ENCODE measurements at regions of chr6 and their contacts with region 1.

Region 1: GRCh38 chr6:109526905-109527628 is 44.0 kb upstream of the ZBTB24 start:
- DNase-seq: peak; percentile 33 to 80 (median 48)
- ATAC-seq: peak; percentile 98
- H3K4me3 ChIP-seq: no peak overlapping the region
- H3K27ac ChIP-seq: no peak overlapping the region
- H3K4me1 ChIP-seq: no peaks in the 10 kb centered on the region
- H3K27me3 ChIP-seq: peaks cover 9 to 14% of the 10 kb centered on the region in 2 experiments; a peak in 2 of 5 replicates
- CTCF ChIP-seq: peak; percentile 57 to 83 (median 69)
- EP300 ChIP-seq: no peak
- POLR2A ChIP-seq: no peak
- RAD21 ChIP-seq: peak; percentile 74 to 85

Region 2: DNA sequence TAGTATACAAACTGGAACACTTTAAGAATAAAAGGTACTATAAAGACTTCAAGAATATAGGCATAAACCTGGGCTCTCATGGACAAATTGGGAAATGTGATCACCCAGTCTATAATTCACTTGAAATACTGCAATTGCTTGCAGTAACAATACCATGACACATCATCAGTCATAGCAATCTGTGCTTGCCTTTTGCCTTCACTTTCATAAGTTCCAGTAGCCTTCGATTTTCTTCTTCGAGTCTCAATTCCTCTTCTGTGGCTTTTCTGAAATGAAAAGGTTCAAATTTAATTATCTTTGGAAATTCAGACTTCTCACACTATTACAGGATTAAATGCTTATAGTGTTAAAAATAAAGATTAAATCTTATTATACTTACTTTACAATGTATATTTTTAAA is 52.3 kb after region 1 on chr6:
- CTCF ChIA-PET with region 1: no interaction called
- POLR2A ChIA-PET with region 1: no interaction called
- in situ Hi-C with region 1: no loop called
- intact Hi-C with region 1: no loop called
- DNase-seq: no peak
- ATAC-seq: no peak
- H3K4me3 ChIP-seq: no peak overlapping the region
- H3K27ac ChIP-seq: no peak overlapping the region
- H3K4me1 ChIP-seq: no peaks in the 10 kb centered on the region
- H3K27me3 ChIP-seq: no peaks in the 10 kb centered on the region
- CTCF ChIP-seq: no peak
- EP300 ChIP-seq: no peak
- POLR2A ChIP-seq: no peak
- RAD21 ChIP-seq: no peak

Region 3: GRCh38 chr6:109690737-109691621 is 163.9 kb after region 1 on chr6 and contains the starts of genes AK9 and FIG4:
- CTCF ChIA-PET with region 1: no interaction called
- POLR2A ChIA-PET with region 1: no interaction called
- in situ Hi-C with region 1: no loop called
- intact Hi-C with region 1: loop called (anchors 5 kb)
- DNase-seq: peak; percentile 89 to 95 (median 92)
- ATAC-seq: peak; percentile 100
- H3K4me3 ChIP-seq: peak within 1 kb of the TSS; percentile 55
- H3K27ac ChIP-seq: peak within 1 kb of the TSS; percentile 29; the same call in 1 of the 3 replicates
- H3K4me1 ChIP-seq: peaks cover 0 to 12% of the 10 kb centered on the region in 2 experiments; a peak in 3 of 5 replicates
- H3K27me3 ChIP-seq: peaks cover 2 to 4% of the 10 kb centered on the region in 2 experiments; a peak in 2 of 5 replicates
- CTCF ChIP-seq: peak in 2 of 3 experiments; percentile 29 to 36; a peak in 3 of 6 replicates
- EP300 ChIP-seq: no peak
- POLR2A ChIP-seq: peak; percentile 69
- RAD21 ChIP-seq: peak; percentile 42 to 46; a peak in 3 of 4 replicates
- polyA plus RNA-seq, gene AK9: 1.2 to 1.9 TPM
- polyA plus RNA-seq, gene FIG4: 1.5 to 1.8 TPM

Region 4: DNA sequence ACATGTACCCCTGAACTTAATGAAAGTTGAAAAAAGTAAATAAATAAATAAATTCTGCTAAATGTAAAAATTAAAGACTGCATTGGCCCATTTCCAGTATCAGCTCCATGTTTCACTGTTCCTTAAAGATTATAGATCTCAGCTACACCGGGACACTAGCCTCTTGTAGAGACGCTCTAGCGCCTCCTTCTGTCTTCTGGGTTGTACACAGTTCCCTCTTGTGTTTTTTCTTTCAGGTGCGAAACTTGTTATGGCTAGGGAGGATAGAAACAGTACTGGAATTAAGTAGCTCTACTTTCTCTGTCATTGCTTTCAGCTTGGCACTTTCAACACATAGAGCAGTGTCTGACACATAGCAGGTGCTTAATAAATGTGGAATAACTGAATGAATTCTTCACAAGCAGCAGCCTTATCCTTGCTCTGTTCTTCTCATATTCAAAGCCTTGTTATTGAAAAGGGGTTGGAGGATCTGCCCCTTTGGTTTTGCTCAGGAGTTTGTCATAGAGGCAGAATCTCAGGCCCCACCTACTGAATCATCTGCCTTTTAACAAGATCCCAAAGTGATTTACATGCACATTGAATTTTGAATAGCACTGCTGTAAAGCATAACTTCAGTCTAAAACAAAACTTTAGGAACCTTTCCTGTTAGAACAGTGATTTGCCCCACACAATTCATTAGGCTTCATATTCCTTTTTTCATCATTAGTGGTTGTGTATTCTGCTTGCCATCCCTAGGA is 256.4 kb after region 1 on chr6:
- CTCF ChIA-PET with region 1: no interaction called
- POLR2A ChIA-PET with region 1: no interaction called
- in situ Hi-C with region 1: no loop called
- intact Hi-C with region 1: loop called (anchors 1 kb)
- DNase-seq: peak; percentile 14 to 52 (median 24)
- ATAC-seq: peak; percentile 86
- H3K4me3 ChIP-seq: no peak overlapping the region
- H3K27ac ChIP-seq: no peak overlapping the region
- H3K4me1 ChIP-seq: no peaks in the 10 kb centered on the region
- H3K27me3 ChIP-seq: no peaks in the 10 kb centered on the region; a peak in 1 of 5 replicates
- CTCF ChIP-seq: peak; percentile 65 to 80 (median 67)
- EP300 ChIP-seq: no peak
- POLR2A ChIP-seq: no peak
- RAD21 ChIP-seq: peak; percentile 88 to 91

Region 5: DNA sequence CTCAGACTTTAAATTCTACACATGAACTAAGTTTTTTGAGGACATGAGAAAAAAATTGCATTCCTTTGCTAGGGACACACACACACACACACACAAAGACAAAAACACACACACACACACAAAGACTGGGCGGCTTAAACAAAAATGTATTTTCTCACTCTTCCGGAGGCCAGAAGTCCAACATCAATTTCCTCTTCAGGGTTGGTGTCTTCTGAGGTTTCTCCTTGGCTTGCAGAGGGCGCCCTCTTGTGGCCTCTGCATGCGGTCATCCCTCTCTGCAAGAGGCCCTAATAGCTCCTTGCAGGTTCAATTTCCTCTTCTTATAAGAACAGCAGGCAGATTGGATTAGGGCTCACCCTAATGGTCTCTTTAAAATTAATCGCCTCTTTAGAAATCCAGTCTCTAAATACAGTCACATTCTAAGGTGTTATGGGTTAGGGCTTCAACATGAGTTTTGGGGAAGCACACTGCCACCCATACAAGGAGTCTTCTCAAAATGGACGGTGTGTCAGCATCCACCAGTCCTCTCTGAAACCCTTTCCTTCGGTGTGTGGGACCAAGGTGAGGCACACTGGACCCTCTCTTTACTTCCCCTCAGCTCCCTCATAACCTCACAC is 512.4 kb after region 1 on chr6:
- CTCF ChIA-PET with region 1: no interaction called
- POLR2A ChIA-PET with region 1: no interaction called
- in situ Hi-C with region 1: loop called (anchors 25 kb)
- intact Hi-C with region 1: loop called (anchors 1 kb)
- DNase-seq: peak; percentile 66 to 85 (median 68)
- ATAC-seq: peak; percentile 96
- H3K4me3 ChIP-seq: no peak overlapping the region
- H3K27ac ChIP-seq: no peak overlapping the region
- H3K4me1 ChIP-seq: no peaks in the 10 kb centered on the region
- H3K27me3 ChIP-seq: peaks cover 4 to 23% of the 10 kb centered on the region in 2 experiments; a peak in 3 of 5 replicates
- CTCF ChIP-seq: peak; percentile 90 to 94 (median 90)
- EP300 ChIP-seq: no peak
- POLR2A ChIP-seq: no peak
- RAD21 ChIP-seq: peak; percentile 95 to 97

Region 6: GRCh38 chr6:110053395-110054240 is 526.6 kb after region 1 on chr6:
- CTCF ChIA-PET with region 1: interaction called, 6 read pairs
- POLR2A ChIA-PET with region 1: no interaction called
- in situ Hi-C with region 1: loop called (anchors 25 kb)
- intact Hi-C with region 1: loop called (anchors 2 kb)
- DNase-seq: peak; percentile 29 to 45 (median 35)
- ATAC-seq: peak; percentile 75; the same call in 2 of the 3 replicates
- H3K4me3 ChIP-seq: no peak overlapping the region
- H3K27ac ChIP-seq: no peak overlapping the region
- H3K4me1 ChIP-seq: no peaks in the 10 kb centered on the region
- H3K27me3 ChIP-seq: peaks cover 2 to 30% of the 10 kb centered on the region in 2 experiments
- CTCF ChIP-seq: peak; percentile 52 to 77 (median 70)
- EP300 ChIP-seq: no peak
- POLR2A ChIP-seq: no peak
- RAD21 ChIP-seq: peak; percentile 83

Region 7: DNA sequence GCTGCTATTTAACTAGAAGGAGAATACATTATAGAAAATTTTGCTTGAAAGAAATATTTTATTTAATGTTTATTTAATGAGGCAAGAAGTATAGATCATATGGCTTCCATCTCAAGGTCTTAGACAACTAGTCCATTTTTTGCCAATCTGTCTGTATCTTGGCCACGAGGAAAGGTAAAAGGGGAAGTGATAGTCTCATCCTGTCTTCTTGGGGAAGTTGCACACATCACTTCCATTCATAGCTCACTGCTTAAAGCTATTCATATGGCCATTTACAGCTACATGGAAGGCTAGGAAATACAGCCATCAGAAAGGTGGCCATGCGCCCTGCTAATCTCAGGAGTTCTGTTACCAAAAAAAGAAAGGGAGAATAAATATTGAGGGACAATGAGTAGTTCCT is 780.3 kb after region 1 on chr6:
- CTCF ChIA-PET with region 1: no interaction called
- POLR2A ChIA-PET with region 1: no interaction called
- in situ Hi-C with region 1: no loop called
- intact Hi-C with region 1: no loop called
- DNase-seq: no peak
- ATAC-seq: no peak
- H3K4me3 ChIP-seq: no peak overlapping the region
- H3K27ac ChIP-seq: no peak overlapping the region
- H3K4me1 ChIP-seq: no peaks in the 10 kb centered on the region
- H3K27me3 ChIP-seq: no peaks in the 10 kb centered on the region; a peak in 1 of 5 replicates
- CTCF ChIP-seq: no peak
- EP300 ChIP-seq: no peak
- POLR2A ChIP-seq: no peak
- RAD21 ChIP-seq: no peak

Region 8: GRCh38 chr6:110389689-110390382 is 862.8 kb after region 1 on chr6:
- CTCF ChIA-PET with region 1: interaction called, 7 read pairs
- POLR2A ChIA-PET with region 1: no interaction called
- in situ Hi-C with region 1: loop called (anchors 25 kb)
- intact Hi-C with region 1: loop called (anchors 5 kb)
- DNase-seq: peak in 1 of 4 experiments; percentile 23
- ATAC-seq: peak; percentile 42; the same call in 1 of the 3 replicates
- H3K4me3 ChIP-seq: no peak overlapping the region
- H3K27ac ChIP-seq: no peak overlapping the region
- H3K4me1 ChIP-seq: peaks cover 0 to 3% of the 10 kb centered on the region in 2 experiments; a peak in 2 of 5 replicates
- H3K27me3 ChIP-seq: peaks cover 0 to 12% of the 10 kb centered on the region in 2 experiments; a peak in 2 of 5 replicates
- CTCF ChIP-seq: no peak
- EP300 ChIP-seq: no peak; the same call in 1 of the 2 replicates
- POLR2A ChIP-seq: no peak
- RAD21 ChIP-seq: no peak

Region 9: DNA sequence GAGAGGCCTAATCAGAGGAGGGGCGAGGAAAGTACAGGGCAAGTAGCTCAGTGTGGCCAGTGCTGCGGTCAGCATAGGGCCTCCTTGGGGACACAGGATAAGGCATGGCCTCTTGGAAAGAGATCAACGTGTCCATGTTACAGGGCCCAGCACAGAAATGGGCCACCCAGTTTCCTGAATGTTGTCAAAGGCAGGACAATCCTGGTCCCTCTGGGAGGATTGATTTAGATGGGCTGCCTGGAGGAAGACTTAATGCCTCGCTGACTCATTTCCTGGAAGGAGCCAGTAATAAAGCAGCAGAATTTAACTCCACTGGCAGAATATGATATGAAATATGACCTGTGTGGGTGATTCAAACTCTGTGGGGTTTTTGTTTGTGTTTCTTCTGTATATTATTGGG is 871.7 kb after region 1 on chr6:
- CTCF ChIA-PET with region 1: no interaction called
- POLR2A ChIA-PET with region 1: no interaction called
- in situ Hi-C with region 1: loop called (anchors 25 kb)
- intact Hi-C with region 1: loop called (anchors 5 kb)
- DNase-seq: peak in 2 of 4 experiments; percentile 14 to 30
- ATAC-seq: peak; percentile 74
- H3K4me3 ChIP-seq: no peak overlapping the region
- H3K27ac ChIP-seq: no peak overlapping the region
- H3K4me1 ChIP-seq: peaks cover 9 to 11% of the 10 kb centered on the region in 2 experiments; a peak in 3 of 5 replicates
- H3K27me3 ChIP-seq: peaks cover 0 to 14% of the 10 kb centered on the region in 2 experiments; a peak in 3 of 5 replicates
- CTCF ChIP-seq: no peak
- EP300 ChIP-seq: no peak
- POLR2A ChIP-seq: no peak
- RAD21 ChIP-seq: no peak